ENCODE measurements at regions of chr19 and their contacts with region 1.

Region 1: GRCh38 chr19:33143897-33144405 is 12.0 kb downstream of the WDR88 start:
- DNase-seq: peak; percentile 54 to 66 (median 56)
- H3K4me3 ChIP-seq: no peak overlapping the region
- H3K4me3 Mint-ChIP-seq: peak overlapping the region in 6 of 8 donors; percentile 7 to 64 (median 33)
- H3K27ac ChIP-seq: no peak overlapping the region
- H3K27ac Mint-ChIP-seq: peak overlapping the region in 1 of 7 donors; percentile 31
- H3K4me1 ChIP-seq: peaks cover 6% of the 10 kb centered on the region
- H3K4me1 Mint-ChIP-seq: peaks cover 3 to 6% (median 5%) of the 10 kb centered on the region in 4 donors
- H3K27me3 ChIP-seq: no peaks in the 10 kb centered on the region
- H3K27me3 Mint-ChIP-seq: peaks cover 4 to 7% of the 10 kb centered on the region in 2 donors

Region 2: DNA sequence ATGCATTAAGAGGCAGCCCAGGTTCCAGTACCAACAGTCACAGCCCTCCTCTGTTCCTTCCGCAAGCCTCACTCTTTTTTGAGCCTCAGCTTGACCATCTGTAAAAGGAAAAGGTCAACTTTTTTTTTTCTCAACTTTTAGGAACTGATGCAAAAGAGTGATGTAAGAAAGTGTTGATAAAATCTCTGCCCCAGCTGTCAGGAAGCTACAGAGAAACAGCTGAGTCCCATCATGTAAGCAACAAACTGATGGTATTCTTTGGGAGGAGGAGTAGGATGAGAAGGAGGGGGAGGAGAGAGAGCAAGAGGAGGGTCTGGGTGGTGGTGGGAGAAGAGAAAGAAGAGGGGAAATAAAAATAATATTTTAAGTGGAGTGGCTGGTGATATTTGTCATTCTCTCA is 1560.8 kb before region 1 on chr19:
- CTCF ChIA-PET with region 1: no interaction called
- POLR2A ChIA-PET with region 1: no interaction called
- intact Hi-C with region 1: no loop called
- DNase-seq: no peak
- H3K4me3 ChIP-seq: no peak overlapping the region
- H3K4me3 Mint-ChIP-seq: no peak overlapping the region
- H3K27ac ChIP-seq: no peak overlapping the region
- H3K27ac Mint-ChIP-seq: no peak overlapping the region
- H3K4me1 ChIP-seq: no peaks in the 10 kb centered on the region
- H3K4me1 Mint-ChIP-seq: no peaks in the 10 kb centered on the region
- H3K27me3 ChIP-seq: no peaks in the 10 kb centered on the region
- H3K27me3 Mint-ChIP-seq: peaks cover 0 to 3% of the 10 kb centered on the region in 2 donors

Region 3: GRCh38 chr19:33118643-33119042 is 25.3 kb before region 1 on chr19:
- CTCF ChIA-PET with region 1: no interaction called
- POLR2A ChIA-PET with region 1: no interaction called
- intact Hi-C with region 1: no loop called
- DNase-seq: no peak
- H3K4me3 ChIP-seq: no peak overlapping the region
- H3K4me3 Mint-ChIP-seq: no peak overlapping the region
- H3K27ac ChIP-seq: no peak overlapping the region
- H3K27ac Mint-ChIP-seq: peak overlapping the region in 1 of 7 donors; percentile 48
- H3K4me1 ChIP-seq: no peaks in the 10 kb centered on the region
- H3K4me1 Mint-ChIP-seq: no peaks in the 10 kb centered on the region
- H3K27me3 ChIP-seq: no peaks in the 10 kb centered on the region
- H3K27me3 Mint-ChIP-seq: no peaks in the 10 kb centered on the region

Region 4: DNA sequence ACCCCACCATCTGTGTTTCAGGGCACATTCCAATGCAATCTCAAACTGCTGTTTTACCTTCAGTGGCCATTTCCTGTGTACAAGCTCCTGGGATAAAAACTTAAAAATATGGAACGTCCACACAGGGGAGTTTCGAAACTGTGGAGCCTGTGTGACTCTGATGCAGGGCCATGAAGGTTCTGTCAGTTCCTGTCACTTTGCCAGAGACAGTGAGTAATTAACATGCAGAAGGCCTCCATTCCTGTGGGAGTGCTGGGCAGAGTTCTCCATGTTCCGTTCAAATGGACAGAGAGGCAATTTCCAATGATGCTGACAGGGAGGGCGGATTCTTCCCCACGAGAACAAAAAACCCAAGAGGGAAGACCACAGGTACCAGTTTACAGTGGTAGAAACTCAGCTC is 12.4 kb after region 1 on chr19:
- CTCF ChIA-PET with region 1: interaction called, 21 read pairs
- POLR2A ChIA-PET with region 1: interaction called, 3 read pairs
- intact Hi-C with region 1: no loop called
- DNase-seq: no peak
- H3K4me3 ChIP-seq: no peak overlapping the region
- H3K4me3 Mint-ChIP-seq: no peak overlapping the region
- H3K27ac ChIP-seq: no peak overlapping the region
- H3K27ac Mint-ChIP-seq: no peak overlapping the region
- H3K4me1 ChIP-seq: peaks cover 29% of the 10 kb centered on the region
- H3K4me1 Mint-ChIP-seq: peaks cover 20 to 37% (median 28%) of the 10 kb centered on the region in 4 donors
- H3K27me3 ChIP-seq: no peaks in the 10 kb centered on the region
- H3K27me3 Mint-ChIP-seq: no peaks in the 10 kb centered on the region

Region 5: GRCh38 chr19:33186431-33187182 is 42.7 kb after region 1 on chr19:
- CTCF ChIA-PET with region 1: interaction called, 62 read pairs
- POLR2A ChIA-PET with region 1: no interaction called
- intact Hi-C with region 1: loop called (anchors 1 kb)
- DNase-seq: no peak
- H3K4me3 ChIP-seq: no peak overlapping the region
- H3K4me3 Mint-ChIP-seq: no peak overlapping the region
- H3K27ac ChIP-seq: no peak overlapping the region
- H3K27ac Mint-ChIP-seq: no peak overlapping the region
- H3K4me1 ChIP-seq: peaks cover 6% of the 10 kb centered on the region
- H3K4me1 Mint-ChIP-seq: peaks cover 0 to 11% (median under 1%) of the 10 kb centered on the region in 4 donors
- H3K27me3 ChIP-seq: no peaks in the 10 kb centered on the region
- H3K27me3 Mint-ChIP-seq: peaks cover 0 to 7% of the 10 kb centered on the region in 2 donors

Region 6: GRCh38 chr19:33376423-33376822 is 232.5 kb after region 1 on chr19:
- CTCF ChIA-PET with region 1: no interaction called
- POLR2A ChIA-PET with region 1: no interaction called
- intact Hi-C with region 1: no loop called
- DNase-seq: no peak
- H3K4me3 ChIP-seq: no peak overlapping the region
- H3K4me3 Mint-ChIP-seq: peak overlapping the region in 4 of 8 donors; percentile 8 to 93 (median 33)
- H3K27ac ChIP-seq: no peak overlapping the region
- H3K27ac Mint-ChIP-seq: peak overlapping the region in 3 of 7 donors; percentile 52 to 80 (median 55)
- H3K4me1 ChIP-seq: peaks cover 42% of the 10 kb centered on the region
- H3K4me1 Mint-ChIP-seq: peaks cover 46 to 78% (median 60%) of the 10 kb centered on the region in 4 donors
- H3K27me3 ChIP-seq: no peaks in the 10 kb centered on the region
- H3K27me3 Mint-ChIP-seq: no peaks in the 10 kb centered on the region

Region 7: GRCh38 chr19:33406521-33407139 is 262.7 kb after region 1 on chr19:
- CTCF ChIA-PET with region 1: interaction called, 6 read pairs
- POLR2A ChIA-PET with region 1: no interaction called
- intact Hi-C with region 1: loop called (anchors 1 kb)
- DNase-seq: peak; percentile 52 to 69 (median 56)
- H3K4me3 ChIP-seq: no peak overlapping the region
- H3K4me3 Mint-ChIP-seq: no peak overlapping the region
- H3K27ac ChIP-seq: no peak overlapping the region
- H3K27ac Mint-ChIP-seq: peak overlapping the region in 1 of 7 donors; percentile 2
- H3K4me1 ChIP-seq: no peaks in the 10 kb centered on the region
- H3K4me1 Mint-ChIP-seq: no peaks in the 10 kb centered on the region
- H3K27me3 ChIP-seq: no peaks in the 10 kb centered on the region
- H3K27me3 Mint-ChIP-seq: no peaks in the 10 kb centered on the region